Tibial artery (tissue), 4 donors: ENCODE measurements at regions of chr22 and their contacts with region 1.

Region 1: DNA sequence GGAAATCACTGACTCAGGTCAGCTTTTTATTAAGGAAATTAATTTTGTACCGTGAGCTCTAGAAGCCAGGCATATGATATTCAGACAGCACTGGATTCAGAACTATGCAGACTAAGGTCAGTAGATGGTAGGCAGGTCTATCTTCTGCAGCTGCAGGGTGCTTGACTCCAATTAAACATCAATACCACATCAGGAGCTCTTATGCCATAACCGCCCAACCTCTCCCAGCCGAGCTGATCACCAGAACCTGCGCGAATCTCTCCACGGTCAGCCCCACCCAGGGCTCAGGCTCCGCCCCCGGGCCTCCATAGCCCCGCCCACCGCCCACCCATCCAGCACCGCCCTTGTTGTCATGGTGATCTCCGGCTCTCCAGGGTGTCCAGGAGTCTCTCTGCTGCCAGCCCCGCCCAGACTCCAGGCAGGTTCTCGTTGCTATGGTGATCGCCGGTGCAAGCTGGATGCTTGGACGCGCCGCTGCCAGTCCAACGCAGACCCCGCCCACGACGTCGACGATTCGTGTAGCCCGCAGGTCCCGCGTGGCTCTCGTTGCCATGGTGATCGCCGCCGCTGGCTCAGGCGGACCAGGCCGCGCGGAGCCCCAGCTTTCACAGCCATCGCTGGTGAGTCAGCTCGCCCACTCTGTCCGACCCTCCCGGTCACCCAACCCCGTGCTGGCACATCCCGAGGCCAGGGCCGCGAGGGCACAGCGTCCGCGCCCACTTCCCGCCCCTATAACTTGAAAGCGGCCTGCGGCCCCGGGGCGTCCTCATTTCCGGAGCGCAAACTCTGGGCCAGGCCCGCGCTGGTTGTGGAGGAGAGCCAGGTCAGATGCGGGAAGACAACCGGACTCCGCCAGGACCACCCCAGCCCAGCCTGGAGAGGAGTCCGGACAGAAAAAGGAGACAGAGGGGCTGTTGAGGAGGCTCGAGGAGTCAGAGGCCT is at the start of gene RAB36:
- DNase-seq: peak; percentile 97 to 98
- H3K4me3 ChIP-seq: peak within 1 kb of the TSS; percentile 41 to 55
- H3K27ac ChIP-seq: peak within 1 kb of the TSS; percentile 64 to 80
- H3K4me1 ChIP-seq: peaks cover 0 to 56% (median 28%) of the 10 kb centered on the region in 4 donors
- H3K27me3 ChIP-seq: no peaks in the 10 kb centered on the region
- CTCF ChIP-seq: no peak

Region 2: DNA sequence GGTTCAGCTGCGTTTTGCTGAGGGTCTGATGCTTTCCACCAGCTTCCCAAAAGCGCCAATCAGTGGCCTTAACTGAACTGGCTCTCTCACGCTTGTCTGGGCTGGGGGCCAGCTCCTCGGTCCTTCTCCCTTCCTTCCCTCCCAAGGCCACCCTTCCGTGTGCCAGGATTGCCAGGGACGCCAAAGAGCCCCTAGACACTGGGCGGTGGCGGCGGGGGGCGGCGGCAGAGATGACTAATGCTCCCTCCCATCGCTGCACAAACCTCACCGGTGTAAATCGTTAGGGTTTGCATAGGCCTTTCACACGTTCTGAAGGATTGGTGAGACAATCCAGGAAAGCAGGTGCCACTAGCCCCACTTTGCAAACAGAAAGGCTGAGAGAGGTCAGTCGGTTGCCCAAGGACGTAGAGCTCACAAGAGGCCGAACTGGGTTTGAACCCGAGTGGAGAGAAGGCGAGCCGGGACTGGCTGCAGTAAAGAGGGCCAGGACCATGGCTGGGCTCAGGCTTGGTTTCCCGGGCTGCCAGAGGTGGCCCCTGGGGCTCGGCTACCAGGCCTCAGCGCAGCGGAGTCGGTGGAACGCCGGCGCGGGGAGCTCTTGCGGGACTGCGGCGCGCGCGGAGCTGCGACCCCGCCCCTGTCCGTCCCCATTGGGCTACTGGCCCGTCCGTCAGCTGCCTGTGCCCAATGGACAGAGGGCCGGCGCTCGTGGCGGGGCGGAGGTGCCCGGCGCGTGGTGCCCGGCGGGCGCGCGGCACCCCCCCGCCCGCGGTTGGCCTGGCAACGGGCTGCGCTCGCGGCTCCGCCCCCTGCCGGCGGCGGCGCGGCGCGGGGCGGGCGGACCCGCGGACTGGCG is 75.5 kb before region 1 on chr22:
- intact Hi-C with region 1: loop called (anchors 5 kb)
- DNase-seq: peak; percentile 85 to 94
- H3K4me3 ChIP-seq: peak overlapping the region; percentile 58 to 83
- H3K27ac ChIP-seq: peak overlapping the region in 1 of 2 donors; percentile 17
- H3K4me1 ChIP-seq: peaks cover 0 to 19% (median 17%) of the 10 kb centered on the region in 4 donors
- H3K27me3 ChIP-seq: no peaks in the 10 kb centered on the region
- CTCF ChIP-seq: peak in 1 of 2 experiments; percentile 23